Activated CD4-positive, alpha-beta memory T cell treated with anti-CD3 and anti-CD28 coated beads for 36 hours (primary cell): ENCODE measurements at regions of chr5 and their contacts with region 1.

Region 1: GRCh38 chr5:36241631-36242533 is at the start of gene NADK2:
- DNase-seq: peak; percentile 96
- H3K4me3 Mint-ChIP-seq: peak within 1 kb of the TSS; percentile 80
- H3K27ac Mint-ChIP-seq: peak within 1 kb of the TSS; percentile 86
- H3K4me1 Mint-ChIP-seq: peaks cover 44% of the 10 kb centered on the region
- H3K27me3 Mint-ChIP-seq: no peaks in the 10 kb centered on the region
- total RNA-seq, gene NADK2: 16.6 to 18.0 TPM

Region 2: DNA sequence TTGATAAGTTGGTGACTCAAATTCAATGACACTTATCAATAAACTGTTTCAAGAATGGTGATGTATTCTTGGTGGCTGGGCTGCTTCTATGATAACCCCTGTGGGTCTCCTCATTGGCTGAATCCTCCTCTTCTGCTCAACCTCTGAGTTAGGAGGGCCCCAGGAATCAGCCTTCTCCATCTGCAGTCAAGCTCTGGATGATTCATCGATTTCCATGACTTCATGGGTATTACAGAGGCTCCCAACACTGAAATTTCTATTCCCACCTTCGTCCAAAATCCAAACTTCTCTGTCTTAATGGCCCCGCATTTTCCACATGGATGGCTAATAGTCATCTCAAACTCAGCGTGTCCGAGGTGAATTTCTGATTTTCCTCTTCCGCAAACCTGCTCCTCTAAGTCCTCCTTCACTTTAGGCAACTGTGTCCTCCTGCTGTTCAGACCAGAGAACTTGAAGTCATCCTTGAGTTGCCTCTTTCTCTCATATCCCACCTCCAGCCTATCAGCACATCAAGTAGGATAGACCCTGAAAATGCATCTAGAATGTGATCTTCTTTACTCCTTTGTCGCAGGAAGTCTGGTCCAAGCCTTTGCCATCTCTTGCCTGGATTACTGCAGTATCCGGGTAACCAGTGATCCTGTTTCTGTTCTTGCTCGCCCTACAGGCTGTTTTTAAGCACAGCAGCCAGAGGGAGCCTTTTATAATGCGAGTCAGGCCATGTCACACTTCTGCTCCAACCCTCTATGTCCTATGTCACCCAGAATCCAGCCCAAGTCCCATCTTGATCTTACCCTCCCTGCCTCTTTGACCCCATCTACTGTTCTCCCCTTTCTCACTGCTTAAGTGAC is 426.6 kb before region 1 on chr5:
- CTCF ChIA-PET with region 1: no interaction called
- POLR2A ChIA-PET with region 1: no interaction called
- intact Hi-C with region 1: loop called (anchors 10 kb)
- DNase-seq: peak; percentile 71
- H3K4me3 Mint-ChIP-seq: no peak overlapping the region
- H3K27ac Mint-ChIP-seq: no peak overlapping the region
- H3K4me1 Mint-ChIP-seq: peaks cover 52% of the 10 kb centered on the region
- H3K27me3 Mint-ChIP-seq: no peaks in the 10 kb centered on the region

Region 3: DNA sequence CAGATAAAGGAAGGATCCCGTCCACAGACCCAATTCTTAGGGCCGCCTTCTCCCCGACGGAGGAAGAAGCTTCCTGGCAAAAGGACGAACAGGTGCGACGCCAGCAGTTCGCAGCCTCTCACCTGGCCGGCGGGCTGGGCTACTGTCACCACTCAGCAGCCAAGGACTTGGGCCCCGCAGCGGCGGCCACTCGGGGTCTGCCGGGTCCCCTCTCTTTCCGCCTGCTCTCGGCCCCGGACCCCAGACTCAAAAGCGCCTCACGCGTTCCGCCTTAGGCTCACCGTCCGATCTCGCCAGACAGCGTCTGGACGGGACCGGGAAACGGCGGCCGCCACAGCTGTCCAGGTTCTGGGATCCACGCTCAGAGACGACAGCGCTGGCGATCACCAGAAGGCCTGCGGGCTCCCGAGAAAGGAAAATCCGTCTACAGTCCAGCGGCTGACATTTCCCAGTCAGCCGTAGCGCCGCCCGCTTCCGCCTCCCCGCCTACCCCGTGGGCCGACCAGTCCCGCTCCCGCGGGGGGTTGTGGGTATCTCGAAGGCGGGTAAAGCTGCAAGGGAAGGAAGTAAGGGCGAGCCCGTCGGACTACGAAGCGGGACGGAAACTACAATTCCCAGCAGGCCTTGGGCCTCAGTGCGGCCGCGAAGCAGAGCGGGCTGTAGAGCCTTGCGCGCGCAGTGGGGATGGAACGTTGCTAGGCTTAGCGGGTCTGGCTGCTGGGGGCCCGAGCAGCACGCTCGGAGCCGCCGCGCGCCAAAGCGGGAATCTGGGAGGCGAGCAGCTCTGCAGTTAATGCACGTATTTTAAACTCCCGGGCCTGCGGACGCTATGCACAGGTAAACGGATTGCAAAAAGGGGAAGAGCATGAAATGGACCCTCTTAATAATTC is 90.2 kb before region 1 on chr5 and contains the starts of genes LMBRD2 and SKP2:
- CTCF ChIA-PET with region 1: interaction called, 11 read pairs
- POLR2A ChIA-PET with region 1: interaction called, 34 read pairs
- intact Hi-C with region 1: loop called (anchors 1 kb)
- DNase-seq: peak; percentile 98
- H3K4me3 Mint-ChIP-seq: peak within 1 kb of the TSS; percentile 95
- H3K27ac Mint-ChIP-seq: peak within 1 kb of the TSS; percentile 84
- H3K4me1 Mint-ChIP-seq: peaks cover 62% of the 10 kb centered on the region
- H3K27me3 Mint-ChIP-seq: no peaks in the 10 kb centered on the region
- total RNA-seq, gene LMBRD2: 8.1 to 10.0 TPM
- total RNA-seq, gene SKP2: 33.1 to 34.7 TPM

Region 4: DNA sequence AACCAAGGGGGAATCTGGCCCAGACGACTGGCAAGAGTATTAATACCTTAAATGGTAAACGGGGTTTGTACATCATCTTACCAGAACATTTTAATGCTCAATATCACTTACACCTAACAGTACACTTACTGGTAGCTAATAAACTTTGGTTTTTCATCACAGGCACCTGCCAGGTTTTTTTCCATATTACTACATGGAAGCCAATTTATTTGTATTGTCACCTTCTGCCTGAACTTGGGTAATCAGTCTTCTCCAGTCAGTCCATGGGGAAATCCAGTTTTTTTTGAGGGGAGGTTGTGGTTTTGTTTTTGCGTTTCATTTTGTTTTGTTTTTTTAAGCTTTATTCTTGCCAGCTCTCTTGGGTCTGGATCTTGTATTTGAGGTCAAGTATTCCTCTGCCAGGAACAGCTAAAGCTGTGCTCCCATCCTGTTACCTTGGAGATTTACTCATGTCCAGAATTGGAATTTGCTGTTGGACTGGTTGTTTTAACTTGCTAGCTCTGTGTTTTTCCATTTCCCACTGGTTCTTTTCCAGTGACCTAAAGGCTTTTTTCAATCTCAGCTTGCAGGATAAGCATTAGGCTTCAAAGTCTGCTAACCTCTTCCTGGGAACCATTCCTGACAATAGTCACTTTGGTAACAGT is 11.0 kb after region 1 on chr5:
- CTCF ChIA-PET with region 1: interaction called, 16 read pairs
- POLR2A ChIA-PET with region 1: no interaction called
- intact Hi-C with region 1: no loop called
- DNase-seq: no peak
- H3K4me3 Mint-ChIP-seq: no peak overlapping the region
- H3K27ac Mint-ChIP-seq: no peak overlapping the region
- H3K4me1 Mint-ChIP-seq: no peaks in the 10 kb centered on the region
- H3K27me3 Mint-ChIP-seq: peaks cover 6% of the 10 kb centered on the region

Region 5: GRCh38 chr5:36606428-36607113 is 364.7 kb after region 1 on chr5 and contains the start of gene SLC1A3:
- CTCF ChIA-PET with region 1: no interaction called
- POLR2A ChIA-PET with region 1: no interaction called
- intact Hi-C with region 1: loop called (anchors 1 kb)
- DNase-seq: peak; percentile 76
- H3K4me3 Mint-ChIP-seq: peak within 1 kb of the TSS; percentile 72
- H3K27ac Mint-ChIP-seq: peak within 1 kb of the TSS; percentile 54
- H3K4me1 Mint-ChIP-seq: peaks cover 18% of the 10 kb centered on the region
- H3K27me3 Mint-ChIP-seq: peaks cover 54% of the 10 kb centered on the region
- total RNA-seq, gene SLC1A3: 0.29 TPM in 1 of 2 experiments, not detected in the other